Activated naive CD4-positive, alpha-beta T cell treated with anti-CD3 and anti-CD28 coated beads for 36 hours (primary cell): ENCODE measurements at regions of chr11 and their contacts with region 1.

Region 1: GRCh38 chr11:25272214-25272613 is 775.4 kb downstream of the LUZP2 start:
- DNase-seq: no peak
- H3K4me3 Mint-ChIP-seq: no peak overlapping the region
- H3K27ac Mint-ChIP-seq: no peak overlapping the region
- H3K4me1 Mint-ChIP-seq: no peaks in the 10 kb centered on the region
- H3K27me3 Mint-ChIP-seq: no peaks in the 10 kb centered on the region

Region 2: DNA sequence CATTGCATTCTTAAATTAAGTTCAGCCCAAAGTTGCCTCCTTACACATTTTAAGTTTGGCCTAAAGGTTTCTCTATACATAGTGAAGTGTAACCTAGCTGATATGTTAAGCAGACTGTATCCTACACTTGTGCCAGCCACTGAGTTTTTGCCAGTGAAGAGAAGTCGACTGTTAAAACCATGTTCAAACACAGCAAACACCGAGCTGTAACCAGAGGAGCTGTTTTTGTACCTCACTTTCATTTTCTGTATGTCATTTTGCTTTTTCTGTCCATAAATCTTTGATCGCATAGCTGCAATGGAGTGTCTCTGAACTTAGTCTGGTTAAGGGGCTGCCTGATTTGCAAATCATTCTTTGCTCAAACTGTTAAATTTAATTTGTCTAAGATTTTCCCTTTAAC is 371.7 kb before region 1 on chr11:
- CTCF ChIA-PET with region 1: no interaction called
- intact Hi-C with region 1: loop called (anchors 10 kb)
- DNase-seq: no peak
- H3K4me3 Mint-ChIP-seq: no peak overlapping the region
- H3K27ac Mint-ChIP-seq: no peak overlapping the region
- H3K4me1 Mint-ChIP-seq: no peaks in the 10 kb centered on the region
- H3K27me3 Mint-ChIP-seq: no peaks in the 10 kb centered on the region